Activated T-helper 2 cell treated with anti-CD3 and anti-CD28 coated beads, Interferon-gamma antibody, Interleukin-2, Interleukin-4, amounts not matched to agents 10 μg/mL and 5 μg/mL and 100 μg/mL, durations not matched to agents 14 hours and 24 hours and 36 hours (primary cell): ENCODE measurements at regions of chr5 and their contacts with region 1.

Region 1: DNA sequence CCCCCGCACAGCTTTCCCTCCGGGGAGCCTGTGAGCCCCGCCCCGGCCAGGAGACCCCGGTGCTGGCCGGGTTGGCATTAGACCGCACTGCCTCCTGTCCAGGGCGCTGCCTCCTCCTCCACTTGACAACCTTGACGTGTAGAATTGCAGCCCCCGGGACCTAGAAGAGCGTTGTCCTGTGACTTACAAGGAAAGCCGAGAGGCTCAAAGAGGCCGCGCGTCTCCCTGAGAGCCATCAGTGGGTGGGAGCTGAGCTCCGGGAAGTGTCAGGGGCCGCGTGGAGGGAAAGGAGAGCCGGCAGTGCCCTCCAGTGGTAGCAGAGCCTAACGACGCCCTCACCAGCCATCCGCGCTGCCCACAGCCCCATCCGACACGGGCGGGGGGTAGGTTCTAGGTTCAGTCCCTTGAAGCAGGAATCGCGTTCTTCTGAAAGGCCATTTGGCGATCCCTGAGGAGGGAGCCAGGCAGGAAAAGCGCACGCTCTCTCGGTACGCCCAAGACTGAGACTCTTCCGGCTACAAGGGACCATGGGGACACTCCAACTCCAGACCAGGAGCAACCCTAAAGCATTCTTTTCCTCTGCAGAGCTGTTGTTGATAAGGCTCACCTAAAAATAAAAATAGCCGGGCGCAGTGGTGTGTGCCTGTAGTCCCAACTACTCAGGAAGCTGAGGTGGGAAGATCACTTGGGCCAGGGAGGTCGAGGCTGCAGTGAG is 40.6 kb upstream of the SAP30L start:
- DNase-seq: peak; percentile 56
- H3K4me3 Mint-ChIP-seq: peak overlapping the region; percentile 26
- H3K27ac Mint-ChIP-seq: no peak overlapping the region
- H3K4me1 Mint-ChIP-seq: peaks cover 9% of the 10 kb centered on the region
- H3K27me3 Mint-ChIP-seq: no peaks in the 10 kb centered on the region

Region 2: GRCh38 chr5:153974131-153974812 is 431.0 kb before region 1 on chr5:
- intact Hi-C with region 1: loop called (anchors 1 kb)
- DNase-seq: peak; percentile 11
- H3K4me3 Mint-ChIP-seq: no peak overlapping the region
- H3K27ac Mint-ChIP-seq: no peak overlapping the region
- H3K4me1 Mint-ChIP-seq: peaks cover 3% of the 10 kb centered on the region
- H3K27me3 Mint-ChIP-seq: peaks cover 9% of the 10 kb centered on the region

Region 3: GRCh38 chr5:154179846-154180710 is 225.2 kb before region 1 on chr5:
- intact Hi-C with region 1: loop called (anchors 2 kb)
- DNase-seq: no peak
- H3K4me3 Mint-ChIP-seq: no peak overlapping the region
- H3K27ac Mint-ChIP-seq: no peak overlapping the region
- H3K4me1 Mint-ChIP-seq: peaks cover 16% of the 10 kb centered on the region
- H3K27me3 Mint-ChIP-seq: peaks cover 19% of the 10 kb centered on the region